Activated T-helper 2 cell treated with anti-CD3 and anti-CD28 coated beads, Interferon-gamma antibody, Interleukin-2, Interleukin-4, amounts not matched to agents 10 μg/mL and 5 μg/mL and 100 μg/mL, durations not matched to agents 14 hours and 24 hours and 36 hours (primary cell): ENCODE measurements at regions of chr11 and their contacts with region 1.

Region 1: DNA sequence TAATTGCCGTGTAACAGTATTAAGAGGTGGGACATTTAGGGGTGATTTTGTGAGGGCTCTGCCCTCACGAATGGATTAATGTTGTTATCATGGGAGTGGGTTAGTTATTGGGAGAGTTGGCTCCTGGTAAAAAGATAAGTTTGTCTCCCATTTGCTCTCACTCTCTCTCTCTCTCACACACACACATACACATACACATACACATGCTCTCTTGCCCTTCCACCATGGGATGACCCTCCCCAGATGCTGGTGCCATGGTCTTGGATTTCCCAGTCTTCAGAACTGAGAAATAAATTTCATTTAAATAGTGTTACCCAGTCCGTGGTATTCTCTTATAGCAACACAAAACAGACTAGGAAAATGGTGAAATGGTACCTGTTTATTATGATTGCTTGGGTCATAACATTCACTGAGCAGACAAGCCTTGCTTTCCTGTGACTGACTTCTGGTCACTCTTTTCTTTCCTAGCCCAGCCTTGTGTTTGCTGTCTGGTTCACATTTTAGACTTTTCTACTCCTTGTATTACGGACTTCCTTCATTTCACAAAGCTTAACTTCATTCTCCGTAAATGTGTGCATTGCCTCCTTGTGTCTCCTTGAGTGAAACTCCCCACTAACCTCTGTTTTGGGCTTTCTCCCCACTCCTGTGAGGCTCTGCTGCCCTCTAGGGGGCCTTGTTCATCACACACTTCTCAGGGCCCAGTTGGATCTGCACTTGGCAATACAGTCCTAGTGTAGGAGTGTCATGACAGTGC is 206.5 kb upstream of the CTSC start:
- DNase-seq: peak; percentile 71
- H3K4me3 Mint-ChIP-seq: no peak overlapping the region
- H3K27ac Mint-ChIP-seq: no peak overlapping the region
- H3K4me1 Mint-ChIP-seq: peaks cover 4% of the 10 kb centered on the region
- H3K27me3 Mint-ChIP-seq: peaks cover 15% of the 10 kb centered on the region

Region 2: DNA sequence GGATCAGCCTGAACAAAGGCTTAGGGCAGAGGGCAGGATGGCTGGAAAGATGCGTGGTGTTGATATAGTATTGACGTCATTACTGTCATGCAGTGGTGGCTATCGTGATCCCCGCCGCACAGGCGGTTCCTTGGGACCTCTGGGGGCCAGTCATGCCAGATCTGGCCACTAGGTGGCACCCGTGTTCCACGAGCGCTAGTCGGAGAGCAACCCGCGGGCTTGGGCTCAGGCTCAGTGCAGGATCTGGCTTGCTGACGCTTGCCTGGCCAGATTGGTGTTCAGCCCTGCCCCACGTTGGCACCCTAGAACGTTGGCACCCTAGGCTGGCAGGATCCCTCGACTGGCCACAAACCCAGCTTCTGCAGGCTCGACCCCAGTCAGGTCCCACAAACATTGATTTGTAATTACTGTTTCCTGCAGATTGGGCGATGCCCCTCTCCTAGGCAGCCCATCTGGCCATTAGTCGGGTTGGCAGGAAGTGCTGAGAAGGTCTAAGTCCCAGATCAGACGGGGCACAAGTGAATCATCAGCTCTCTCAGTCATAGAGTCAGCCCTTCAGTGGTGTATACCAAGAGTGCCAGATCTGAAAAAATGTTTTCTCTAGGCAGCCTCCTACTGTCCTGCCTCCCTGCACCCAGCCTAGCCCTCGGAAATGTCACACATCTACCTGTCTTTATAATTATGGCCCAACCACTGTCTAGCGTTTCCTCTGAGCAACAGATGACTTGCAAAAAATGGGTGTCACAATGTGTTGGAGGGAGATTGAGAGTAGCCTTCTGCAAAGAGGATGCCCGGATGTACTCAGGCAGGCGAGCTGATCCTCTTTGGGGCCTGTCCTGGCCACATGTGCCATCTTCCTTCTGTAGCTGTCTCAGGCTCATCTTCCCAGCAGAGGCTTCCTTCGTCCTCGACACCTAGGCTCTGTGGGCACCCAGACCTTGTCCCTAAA is 1191.0 kb before region 1 on chr11:
- intact Hi-C with region 1: loop called (anchors 5 kb)
- DNase-seq: peak; percentile 73
- H3K4me3 Mint-ChIP-seq: no peak overlapping the region
- H3K27ac Mint-ChIP-seq: no peak overlapping the region
- H3K4me1 Mint-ChIP-seq: peaks cover 7% of the 10 kb centered on the region
- H3K27me3 Mint-ChIP-seq: peaks cover 7% of the 10 kb centered on the region

Region 3: DNA sequence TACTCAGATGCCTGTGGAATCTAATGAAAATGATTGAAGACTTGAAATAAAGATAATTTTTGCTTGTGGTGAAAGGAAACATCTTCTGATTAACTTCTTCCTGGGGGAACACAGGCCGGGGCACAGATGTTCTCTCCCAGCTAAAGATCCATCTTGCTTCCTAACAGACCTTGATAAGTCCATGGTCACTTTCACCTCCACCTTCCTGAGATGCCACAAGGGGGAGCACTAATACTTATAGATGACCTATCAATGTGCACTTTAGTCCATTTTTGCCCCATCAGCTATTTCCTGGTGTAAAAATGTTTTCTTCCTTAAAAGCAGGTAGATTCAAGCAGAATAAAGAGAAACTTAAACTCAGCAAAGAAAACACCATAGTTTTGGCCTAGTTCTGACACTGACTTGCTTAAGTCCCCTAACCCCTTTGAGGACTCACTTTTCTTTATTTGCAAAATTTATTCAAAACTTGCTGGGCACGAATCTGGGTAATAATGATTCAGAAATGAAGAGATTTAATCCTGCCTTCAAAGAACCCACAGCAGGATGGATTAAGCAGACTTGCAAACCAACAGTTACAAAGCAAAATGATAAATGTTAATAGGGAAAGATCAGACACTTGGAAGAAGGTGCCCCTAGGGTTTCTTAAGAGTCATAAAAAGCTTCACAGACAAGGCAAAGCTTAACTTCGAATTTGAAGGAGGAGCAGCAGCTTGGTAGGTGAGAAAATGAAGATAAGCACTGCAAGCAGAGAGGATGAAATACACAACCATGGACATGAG is 527.5 kb before region 1 on chr11:
- intact Hi-C with region 1: loop called (anchors 1 kb)
- DNase-seq: peak; percentile 37
- H3K4me3 Mint-ChIP-seq: no peak overlapping the region
- H3K27ac Mint-ChIP-seq: no peak overlapping the region
- H3K4me1 Mint-ChIP-seq: no peaks in the 10 kb centered on the region
- H3K27me3 Mint-ChIP-seq: no peaks in the 10 kb centered on the region

Region 4: DNA sequence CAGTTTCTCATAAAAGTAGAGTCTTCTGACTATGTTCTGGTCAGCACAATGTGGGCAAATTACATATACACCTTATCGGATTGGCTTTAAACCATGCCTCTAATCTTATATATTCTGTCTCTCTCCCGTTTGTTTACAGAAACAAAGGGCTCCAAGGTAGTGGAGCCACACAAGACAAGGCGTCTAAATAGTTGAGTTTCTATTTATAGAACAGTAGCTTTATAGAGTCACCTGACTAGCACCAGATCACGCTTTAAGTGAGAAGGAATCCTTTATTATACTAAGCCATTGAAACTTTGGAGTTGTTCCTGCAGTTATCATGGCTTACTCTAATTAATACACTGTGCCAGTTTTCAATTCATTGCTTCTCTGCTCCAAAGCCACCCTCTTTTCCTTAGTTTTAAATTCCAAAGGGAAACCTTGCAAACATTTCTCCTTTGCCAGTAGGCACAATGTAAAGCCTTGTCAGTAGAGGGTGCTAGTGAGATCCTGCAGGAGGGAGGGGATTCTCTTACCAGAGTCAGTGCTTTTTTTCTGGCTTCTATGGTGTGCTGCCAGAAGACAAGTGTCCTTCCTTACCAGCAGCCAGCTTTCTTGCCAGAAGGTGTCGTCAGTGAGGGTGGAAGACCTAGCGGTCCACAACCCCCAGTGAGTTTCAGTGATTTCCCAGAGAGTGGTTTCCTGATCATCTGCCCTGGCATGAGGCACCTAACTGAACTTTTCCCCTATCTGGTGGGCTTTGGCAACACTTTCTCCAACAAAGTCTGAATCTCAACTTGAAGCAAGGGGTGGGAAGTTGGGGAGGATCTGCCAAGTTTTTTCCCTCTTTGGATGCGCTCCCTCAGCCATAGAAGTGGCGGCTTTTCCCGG is 440.5 kb before region 1 on chr11:
- intact Hi-C with region 1: loop called (anchors 1 kb)
- DNase-seq: peak; percentile 9
- H3K4me3 Mint-ChIP-seq: no peak overlapping the region
- H3K27ac Mint-ChIP-seq: no peak overlapping the region
- H3K4me1 Mint-ChIP-seq: no peaks in the 10 kb centered on the region
- H3K27me3 Mint-ChIP-seq: peaks cover 18% of the 10 kb centered on the region

Region 5: DNA sequence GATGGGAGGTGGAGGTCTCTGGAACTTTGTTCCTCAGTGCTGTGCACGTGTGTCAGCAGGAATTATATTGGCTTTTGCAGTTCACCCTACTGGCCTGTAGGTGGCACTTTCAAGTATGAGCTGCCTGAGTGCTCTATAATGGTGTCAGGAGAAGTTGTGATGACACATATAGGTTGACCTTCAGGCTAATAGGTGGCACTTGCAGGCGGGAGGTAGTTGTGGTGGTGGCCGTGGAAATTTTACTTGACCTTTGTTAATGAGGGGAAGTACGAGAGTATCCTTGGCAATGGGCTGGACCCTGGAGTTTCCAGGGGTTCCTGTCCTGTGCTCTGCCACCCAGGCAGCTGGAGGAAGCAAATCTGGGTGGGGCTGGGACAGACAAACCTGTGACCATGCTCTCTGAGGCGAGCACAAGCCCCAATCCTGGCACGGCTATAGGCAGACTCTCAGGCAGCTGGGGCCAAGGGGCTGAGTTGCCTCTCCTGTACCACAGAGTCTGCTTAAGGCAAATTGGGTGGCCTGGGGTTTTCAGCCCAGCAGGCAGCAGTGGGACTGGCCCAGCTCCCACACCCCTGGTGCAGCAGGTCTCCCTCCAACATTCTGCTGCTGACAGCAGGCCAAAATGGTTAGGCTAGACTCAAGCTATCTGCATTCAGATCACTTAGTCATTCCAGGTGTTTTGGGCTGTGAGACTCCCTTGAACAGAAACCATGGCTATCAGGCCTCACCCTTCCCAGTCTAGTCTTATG is 59.0 kb before region 1 on chr11:
- intact Hi-C with region 1: loop called (anchors 2 kb)
- DNase-seq: no peak
- H3K4me3 Mint-ChIP-seq: no peak overlapping the region
- H3K27ac Mint-ChIP-seq: no peak overlapping the region
- H3K4me1 Mint-ChIP-seq: peaks cover 11% of the 10 kb centered on the region
- H3K27me3 Mint-ChIP-seq: peaks cover 9% of the 10 kb centered on the region